ENCODE measurements at regions of chr15 and their contacts with region 1.

Region 1: GRCh38 chr15:38563723-38564519 is 693 bp downstream of the RASGRP1 start:
- H3K4me3 ChIP-seq: peak overlapping the region; percentile 58
- H3K27ac ChIP-seq: peak overlapping the region; percentile 58; the same call in 1 of the 2 replicates
- H3K4me1 ChIP-seq: no peaks in the 10 kb centered on the region
- CTCF ChIP-seq: peak; percentile 84

Region 2: DNA sequence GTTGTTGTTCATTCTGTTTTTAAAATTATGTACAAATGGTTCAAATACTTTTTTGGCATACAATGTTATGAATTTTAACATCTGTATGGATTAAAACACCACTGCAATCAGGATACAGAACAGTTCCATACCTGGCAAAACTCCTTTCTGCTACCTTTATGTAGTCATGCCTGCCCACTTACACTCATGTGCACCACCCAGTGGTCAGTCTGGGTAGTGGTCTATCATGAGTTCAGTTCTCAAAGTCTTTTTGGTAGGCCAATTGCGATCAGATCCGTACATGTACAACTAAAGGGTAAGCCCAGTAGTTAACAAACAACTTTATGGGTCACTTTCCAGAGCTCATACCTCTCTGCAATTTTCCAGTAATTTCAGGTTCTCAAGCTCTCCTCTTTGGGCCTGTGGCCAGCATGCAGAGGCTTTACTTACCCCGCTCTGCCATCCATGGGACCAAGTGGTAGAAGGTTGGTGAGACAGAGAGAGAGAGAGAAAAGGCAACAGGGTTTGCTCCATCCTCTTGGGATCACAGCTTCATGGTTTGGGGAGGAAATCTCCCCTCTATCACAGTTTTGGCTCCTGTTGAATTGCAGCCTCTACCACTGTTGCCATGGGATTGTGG is 173.9 kb before region 1 on chr15:
- CTCF ChIA-PET with region 1: no interaction called
- POLR2A ChIA-PET with region 1: no interaction called
- H3K4me3 ChIP-seq: no peak overlapping the region
- H3K27ac ChIP-seq: no peak overlapping the region
- H3K4me1 ChIP-seq: no peaks in the 10 kb centered on the region
- CTCF ChIP-seq: no peak

Region 3: GRCh38 chr15:38547255-38547997 is 16.5 kb before region 1 on chr15:
- CTCF ChIA-PET with region 1: interaction called, 25 read pairs
- POLR2A ChIA-PET with region 1: no interaction called
- H3K4me3 ChIP-seq: no peak overlapping the region
- H3K27ac ChIP-seq: no peak overlapping the region
- H3K4me1 ChIP-seq: no peaks in the 10 kb centered on the region
- CTCF ChIP-seq: no peak

Region 4: DNA sequence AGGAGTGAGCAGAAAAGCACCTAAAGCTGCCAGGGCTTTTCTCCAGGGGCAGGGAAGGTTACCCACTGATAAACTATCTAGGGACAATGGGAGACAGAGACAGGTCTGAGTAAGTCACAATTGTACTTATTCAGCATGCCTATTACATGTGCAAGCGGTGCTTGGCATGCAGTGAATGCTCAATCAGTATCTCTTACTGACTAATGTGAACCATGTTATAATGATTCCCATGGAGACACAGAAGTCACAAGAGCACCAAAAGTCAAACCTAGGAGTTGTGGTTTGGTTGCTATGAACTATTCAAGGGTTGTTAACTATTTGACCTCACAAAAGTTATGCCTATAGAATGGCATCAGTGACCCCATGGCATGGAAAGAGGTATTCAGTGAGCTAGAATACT is 50.7 kb after region 1 on chr15:
- CTCF ChIA-PET with region 1: no interaction called
- POLR2A ChIA-PET with region 1: no interaction called
- H3K4me3 ChIP-seq: no peak overlapping the region
- H3K27ac ChIP-seq: no peak overlapping the region
- H3K4me1 ChIP-seq: no peaks in the 10 kb centered on the region
- CTCF ChIP-seq: no peak

Region 5: DNA sequence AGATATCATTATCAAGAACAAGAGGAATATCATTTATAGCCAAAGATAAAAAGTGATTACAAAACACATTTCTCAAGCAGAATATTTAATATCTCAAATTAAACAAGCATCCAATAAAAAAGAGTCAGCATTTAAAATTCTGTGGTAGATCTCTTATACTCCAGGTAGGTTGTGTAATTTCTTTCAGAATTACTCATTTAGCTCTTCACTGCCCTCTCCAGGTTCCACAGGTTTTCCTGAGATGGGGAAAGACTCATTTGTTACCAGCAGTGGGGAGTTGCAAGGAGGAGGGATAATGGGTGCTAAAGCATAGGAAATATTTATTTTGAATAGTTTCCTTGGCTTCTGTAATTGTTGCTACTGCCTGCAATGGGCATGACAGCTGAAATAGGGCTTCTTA is 83.8 kb after region 1 on chr15:
- CTCF ChIA-PET with region 1: interaction called, 17 read pairs
- POLR2A ChIA-PET with region 1: no interaction called
- H3K4me3 ChIP-seq: no peak overlapping the region
- H3K27ac ChIP-seq: no peak overlapping the region
- H3K4me1 ChIP-seq: no peaks in the 10 kb centered on the region
- CTCF ChIP-seq: no peak

Region 6: DNA sequence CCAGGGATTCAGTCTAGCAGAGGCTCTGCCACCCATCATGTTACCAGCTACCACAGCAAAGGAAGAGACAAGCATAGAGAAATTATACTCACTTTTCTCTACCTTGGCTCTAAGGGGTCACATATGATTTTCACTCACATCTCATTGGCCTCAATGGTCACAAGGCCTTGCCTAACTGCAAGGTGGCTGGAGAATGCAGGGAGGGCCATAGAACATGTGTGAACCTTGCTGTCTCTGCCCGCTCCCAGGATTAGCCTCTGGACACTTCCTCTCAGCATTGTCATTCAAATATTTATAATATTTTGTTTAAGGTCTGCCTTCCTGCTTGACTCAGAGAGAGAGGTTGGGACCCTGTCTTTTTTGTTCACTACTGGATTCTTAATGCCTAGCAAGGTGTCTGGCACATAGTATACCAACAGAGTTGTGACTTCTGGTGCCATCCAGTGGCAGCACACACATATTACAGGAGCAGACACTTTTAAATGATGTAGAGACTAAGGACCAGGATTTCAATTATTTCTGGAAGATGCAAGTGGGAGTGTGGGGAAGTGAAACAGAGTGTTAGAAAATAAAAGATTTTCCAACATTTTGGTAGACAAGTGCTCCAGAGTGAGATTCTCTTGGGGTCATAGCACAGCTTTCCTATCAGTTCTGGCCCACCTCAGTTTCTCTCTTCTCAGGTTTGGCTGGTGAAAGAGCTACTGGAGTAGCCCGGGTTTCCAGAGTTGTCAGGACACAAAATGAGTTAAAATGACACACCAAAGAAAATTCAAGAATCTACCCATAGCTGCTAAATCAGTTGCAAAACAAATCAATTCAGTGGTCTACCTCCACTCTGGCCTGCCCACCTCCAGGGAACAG is 119.7 kb after region 1 on chr15:
- CTCF ChIA-PET with region 1: interaction called, 11 read pairs
- POLR2A ChIA-PET with region 1: no interaction called
- H3K4me3 ChIP-seq: no peak overlapping the region
- H3K27ac ChIP-seq: no peak overlapping the region
- H3K4me1 ChIP-seq: no peaks in the 10 kb centered on the region
- CTCF ChIP-seq: peak; percentile 29; the same call in 1 of the 2 replicates

Region 7: DNA sequence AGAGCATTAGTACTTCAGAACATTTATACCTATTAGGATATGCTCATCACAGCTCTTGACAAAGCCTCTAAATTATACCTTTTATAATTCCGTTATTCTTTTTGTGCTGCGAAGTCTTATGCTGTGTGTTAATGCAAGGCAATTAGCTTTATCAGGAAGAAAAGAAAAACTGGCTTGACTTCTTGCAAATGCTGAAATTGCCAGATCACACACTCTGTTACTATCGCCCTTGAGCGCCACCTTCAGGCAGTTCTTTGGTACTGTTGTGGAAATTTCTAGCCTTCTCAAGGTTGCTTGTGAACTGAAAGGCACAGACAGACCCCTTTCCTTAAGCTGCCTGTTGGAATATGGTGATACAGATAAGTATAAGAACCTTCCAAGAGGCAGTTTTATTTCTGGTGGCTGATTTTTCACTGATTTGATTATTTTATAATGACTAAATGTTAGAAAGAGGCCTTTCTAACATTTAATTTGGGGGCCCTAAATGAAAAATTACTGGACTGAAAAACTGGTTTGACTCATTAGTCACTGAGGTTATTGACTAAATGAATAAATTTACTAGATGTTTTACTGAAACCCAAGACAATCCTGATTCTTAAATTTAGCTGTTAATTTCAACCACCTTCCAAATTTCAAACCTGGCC is 126.9 kb after region 1 on chr15:
- CTCF ChIA-PET with region 1: interaction called, 11 read pairs
- POLR2A ChIA-PET with region 1: no interaction called
- H3K4me3 ChIP-seq: no peak overlapping the region
- H3K27ac ChIP-seq: no peak overlapping the region
- H3K4me1 ChIP-seq: no peaks in the 10 kb centered on the region
- CTCF ChIP-seq: no peak